Psoas muscle (tissue), 8 donors: ENCODE measurements at regions of chr1 and their contacts with region 1.

Region 1: GRCh38 chr1:203038891-203039608 is 12.8 kb downstream of the PPFIA4 start:
- DNase-seq: peak; percentile 72 to 89
- ATAC-seq: peak; percentile 59 to 75 (median 62)
- H3K4me3 ChIP-seq: peak overlapping the region; percentile 30
- H3K27ac ChIP-seq: peak overlapping the region; percentile 97
- H3K4me1 ChIP-seq: peaks cover 73% of the 10 kb centered on the region
- H3K27me3 ChIP-seq: no peaks in the 10 kb centered on the region
- CTCF ChIP-seq: peak; percentile 87

Region 2: DNA sequence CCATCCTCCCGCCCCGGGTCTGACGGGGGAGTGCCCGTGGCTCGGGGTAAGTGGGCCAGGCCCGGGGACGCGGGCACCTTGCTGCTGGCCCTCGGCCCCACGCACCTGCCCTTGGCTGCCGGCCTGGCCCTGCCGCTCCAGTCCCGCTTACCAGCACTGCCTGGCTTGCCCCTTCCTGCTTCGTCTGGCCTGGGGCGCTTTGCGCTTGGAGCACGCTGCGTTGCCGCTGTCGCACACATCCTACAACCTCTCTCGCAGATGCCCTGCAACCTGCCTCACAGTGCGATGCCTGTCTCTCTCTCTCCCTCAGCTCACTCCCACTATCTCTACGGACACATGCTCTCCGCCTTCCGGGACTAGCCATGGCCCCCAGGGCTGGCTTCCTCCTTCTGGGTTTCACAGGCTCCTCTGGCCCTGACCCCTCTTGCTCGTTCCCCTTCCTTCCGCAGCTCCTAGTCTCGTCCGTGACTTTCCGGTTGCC is 37.0 kb after region 1 on chr1:
- intact Hi-C with region 1: loop called in 1 of 2 experiments (anchors 5 kb)
- DNase-seq: peak in 1 of 2 donors; percentile 59
- ATAC-seq: peak; percentile 5 to 8 (median 7)
- H3K4me3 ChIP-seq: peak overlapping the region; percentile 51
- H3K27ac ChIP-seq: peak overlapping the region; percentile 23
- H3K4me1 ChIP-seq: peaks cover 33% of the 10 kb centered on the region
- H3K27me3 ChIP-seq: no peaks in the 10 kb centered on the region
- CTCF ChIP-seq: no peak

Region 3: DNA sequence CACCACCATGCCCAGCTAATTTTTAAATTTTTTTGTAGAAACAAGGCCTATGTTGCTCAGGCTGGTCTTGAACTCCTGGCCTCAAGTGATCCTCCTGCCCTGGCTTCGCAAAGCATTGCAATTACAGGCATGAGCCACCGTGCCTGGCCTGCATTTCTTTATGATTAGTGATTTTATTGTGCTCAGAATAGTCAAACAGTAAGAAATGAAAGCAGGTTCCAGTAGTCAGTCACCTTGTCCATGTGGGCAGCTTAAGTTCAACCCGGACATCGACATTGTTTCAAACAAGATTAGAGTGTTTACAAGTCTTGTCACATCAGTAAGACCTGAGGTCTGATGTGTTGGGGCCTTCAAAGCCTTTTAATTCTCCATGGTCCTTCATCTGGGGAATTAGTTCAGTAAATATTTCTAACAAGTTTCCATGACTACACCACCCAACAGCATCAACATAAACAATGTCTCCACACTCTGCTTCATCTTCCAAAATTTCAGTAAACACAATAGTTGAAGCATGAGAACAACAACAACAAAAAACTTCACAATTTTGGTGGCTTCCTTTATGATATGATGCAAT is 73.3 kb after region 1 on chr1:
- intact Hi-C with region 1: loop called in 1 of 2 experiments (anchors 5 kb)
- DNase-seq: no peak
- ATAC-seq: no peak
- H3K4me3 ChIP-seq: no peak overlapping the region
- H3K27ac ChIP-seq: no peak overlapping the region
- H3K4me1 ChIP-seq: peaks cover 14% of the 10 kb centered on the region
- H3K27me3 ChIP-seq: no peaks in the 10 kb centered on the region
- CTCF ChIP-seq: no peak

Region 4: DNA sequence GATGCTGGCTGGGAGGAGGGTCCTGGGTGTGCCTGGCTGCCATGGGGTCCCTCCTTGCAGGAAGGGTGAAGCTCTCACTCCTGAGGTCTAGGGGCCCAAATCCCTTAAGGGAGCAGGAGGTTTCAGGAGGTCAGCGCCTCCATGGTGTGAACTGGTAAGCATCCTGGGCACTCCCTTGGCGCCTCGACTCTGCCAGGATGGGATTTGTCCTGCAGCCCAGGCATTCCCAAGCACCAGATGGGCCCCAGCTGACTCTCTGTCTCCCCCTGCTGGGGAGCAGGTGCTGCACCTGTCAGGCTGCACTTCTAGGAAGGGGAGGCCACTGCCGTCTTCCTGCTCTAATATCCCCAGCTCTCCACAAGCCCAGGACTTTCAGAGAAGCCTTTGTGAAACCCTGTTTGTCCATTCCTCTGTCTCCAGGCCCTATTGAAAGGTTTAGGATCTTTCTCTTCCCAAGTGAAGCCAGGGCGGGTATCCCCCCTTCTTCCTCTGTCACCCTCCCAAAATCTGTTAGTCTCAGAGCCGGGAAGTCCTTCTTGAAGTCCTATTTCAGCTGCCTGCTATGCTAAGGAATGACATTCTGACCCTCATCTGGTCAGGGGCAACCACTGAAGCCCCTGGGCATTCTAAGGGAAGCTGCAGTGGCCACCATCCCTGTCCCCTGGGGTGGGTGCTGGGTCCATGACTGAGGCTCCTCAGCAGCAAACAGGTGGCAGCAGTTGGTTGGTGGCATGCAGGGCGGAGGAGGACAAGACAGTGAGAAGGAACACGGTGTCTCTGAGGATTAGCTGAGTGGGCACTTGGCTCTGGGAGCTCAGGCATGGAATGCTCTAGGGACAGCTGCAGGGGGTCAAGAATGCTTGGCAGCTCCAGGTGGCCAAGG is 133.3 kb after region 1 on chr1:
- intact Hi-C with region 1: loop called (anchors 1 to 2 kb)
- DNase-seq: peak; percentile 74 to 91
- ATAC-seq: peak; percentile 65 to 86 (median 74)
- H3K4me3 ChIP-seq: peak overlapping the region; percentile 23
- H3K27ac ChIP-seq: peak overlapping the region; percentile 89
- H3K4me1 ChIP-seq: peaks cover 45% of the 10 kb centered on the region
- H3K27me3 ChIP-seq: no peaks in the 10 kb centered on the region
- CTCF ChIP-seq: peak; percentile 93

Region 5: DNA sequence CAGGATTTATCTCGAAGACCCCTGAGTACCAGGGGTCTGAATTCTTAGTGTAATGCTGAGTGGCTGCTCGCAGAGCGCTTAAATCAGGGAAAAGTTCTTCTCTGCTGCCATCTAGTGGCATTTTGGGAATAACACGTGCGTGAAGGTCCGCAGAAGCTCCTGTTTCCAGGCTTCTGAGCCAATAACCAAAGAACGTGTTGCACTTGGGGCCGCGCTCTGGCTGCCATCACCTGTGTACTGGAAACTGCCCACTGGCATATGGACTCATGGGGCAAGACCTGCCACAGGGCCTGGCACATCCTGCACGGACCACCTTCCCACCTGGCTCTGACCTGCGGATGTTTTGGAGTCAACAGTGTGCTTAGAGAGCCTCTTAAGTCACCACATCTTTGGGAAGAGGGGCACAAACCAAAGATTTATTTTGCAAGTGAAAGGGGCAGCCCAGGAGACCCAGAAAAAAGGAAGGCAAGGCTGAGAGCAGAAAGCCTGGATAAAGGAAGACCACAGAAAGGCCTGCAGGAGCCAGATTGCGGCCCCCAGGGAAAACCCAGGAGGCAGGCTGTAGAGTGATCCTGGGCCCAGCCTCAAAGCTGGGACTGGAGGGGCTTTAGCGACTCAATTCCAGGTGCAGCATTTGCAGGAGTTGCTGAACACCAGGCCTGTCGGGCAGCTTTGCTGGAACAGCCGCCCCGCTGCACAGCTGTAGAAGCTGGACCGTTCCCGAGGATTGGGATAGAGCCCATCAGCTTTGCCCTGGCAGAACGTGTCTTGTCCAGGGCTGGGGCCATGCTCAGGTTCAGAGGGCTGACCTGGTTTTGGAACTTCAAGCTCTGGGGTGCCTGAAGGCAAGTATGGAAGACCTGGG is 177.5 kb after region 1 on chr1:
- intact Hi-C with region 1: loop called (anchors 1 kb)
- DNase-seq: peak in 1 of 2 donors; percentile 41
- ATAC-seq: peak; percentile 78 to 94 (median 84)
- H3K4me3 ChIP-seq: no peak overlapping the region
- H3K27ac ChIP-seq: no peak overlapping the region
- H3K4me1 ChIP-seq: peaks cover 12% of the 10 kb centered on the region
- H3K27me3 ChIP-seq: no peaks in the 10 kb centered on the region
- CTCF ChIP-seq: peak; percentile 83